Caco-2 (cell line): ENCODE measurements at regions of chr10 and their contacts with region 1.

Region 1: GRCh38 chr10:35119378-35119777 is 7.3 kb upstream of the CREM start:
- DNase-seq: no peak
- H3K4me3 ChIP-seq: no peak overlapping the region
- H3K4me3 Mint-ChIP-seq: no peak overlapping the region
- H3K27ac Mint-ChIP-seq: no peak overlapping the region
- H3K4me1 ChIP-seq: no peaks in the 10 kb centered on the region
- H3K4me1 Mint-ChIP-seq: no peaks in the 10 kb centered on the region
- H3K27me3 ChIP-seq: no peaks in the 10 kb centered on the region
- H3K27me3 Mint-ChIP-seq: peaks cover 4% of the 10 kb centered on the region
- CTCF ChIP-seq: no peak

Region 2: DNA sequence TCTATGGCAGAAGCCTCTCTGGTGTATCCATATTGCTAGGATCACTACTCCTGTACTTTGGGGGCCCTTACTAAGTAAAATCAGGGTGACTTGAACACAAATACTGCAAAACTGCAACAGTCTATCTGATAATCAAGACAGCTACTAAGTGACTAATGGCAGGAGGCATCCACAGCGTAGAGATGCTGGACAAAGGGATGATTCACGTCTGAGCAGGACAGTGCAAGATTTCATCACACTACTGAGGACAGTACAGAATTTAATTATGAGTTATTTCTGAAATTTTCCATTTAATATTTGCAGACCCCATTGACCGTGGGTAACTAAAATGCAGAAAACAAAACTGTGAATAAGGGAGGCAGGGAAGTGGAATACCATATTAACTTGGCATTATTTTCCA is 39.6 kb before region 1 on chr10:
- CTCF ChIA-PET with region 1: no interaction called
- POLR2A ChIA-PET with region 1: no interaction called
- intact Hi-C with region 1: no loop called
- DNase-seq: no peak
- H3K4me3 ChIP-seq: no peak overlapping the region
- H3K4me3 Mint-ChIP-seq: no peak overlapping the region
- H3K27ac Mint-ChIP-seq: no peak overlapping the region
- H3K4me1 ChIP-seq: no peaks in the 10 kb centered on the region
- H3K4me1 Mint-ChIP-seq: no peaks in the 10 kb centered on the region
- H3K27me3 ChIP-seq: no peaks in the 10 kb centered on the region
- H3K27me3 Mint-ChIP-seq: no peaks in the 10 kb centered on the region
- CTCF ChIP-seq: no peak

Region 3: DNA sequence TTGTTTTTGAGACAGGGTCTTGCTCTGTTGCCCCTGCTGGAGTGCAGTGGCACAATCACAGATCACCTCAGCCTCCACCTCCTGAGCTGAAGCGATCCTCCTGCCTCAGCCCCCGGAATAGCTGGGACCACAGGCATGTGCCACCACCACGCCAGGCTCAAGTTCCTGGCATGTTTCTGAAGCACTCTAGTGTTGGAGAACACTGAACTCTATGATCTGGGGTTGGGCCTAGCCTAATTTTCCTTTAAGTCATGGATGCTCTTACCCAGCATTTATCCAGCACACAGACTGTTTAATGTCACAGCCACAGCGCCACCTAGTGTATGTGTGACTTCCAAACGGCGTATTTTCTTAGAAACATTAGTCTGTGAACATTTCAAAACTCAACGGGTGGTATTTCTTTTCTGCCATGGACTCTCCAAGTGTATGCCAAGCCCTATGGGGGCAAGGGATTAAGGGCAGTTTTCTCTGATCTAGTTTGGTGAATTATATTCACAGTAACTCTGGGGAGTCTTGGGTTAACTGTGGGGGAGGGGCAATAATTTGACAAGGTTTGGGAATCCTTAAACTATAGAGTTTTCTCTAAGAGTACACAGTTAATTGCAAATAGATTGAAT is 99.1 kb after region 1 on chr10:
- CTCF ChIA-PET with region 1: interaction called, 12 read pairs
- POLR2A ChIA-PET with region 1: no interaction called
- intact Hi-C with region 1: loop called (anchors 1 kb)
- DNase-seq: peak; percentile 81 to 82
- H3K4me3 ChIP-seq: no peak overlapping the region
- H3K4me3 Mint-ChIP-seq: no peak overlapping the region
- H3K27ac Mint-ChIP-seq: no peak overlapping the region
- H3K4me1 ChIP-seq: peaks cover 5% of the 10 kb centered on the region; the same call in 1 of the 2 replicates
- H3K4me1 Mint-ChIP-seq: peaks cover 7% of the 10 kb centered on the region
- H3K27me3 ChIP-seq: no peaks in the 10 kb centered on the region; the same call in 1 of the 2 replicates
- H3K27me3 Mint-ChIP-seq: peaks cover 3% of the 10 kb centered on the region
- CTCF ChIP-seq: peak; percentile 84 to 91